A549 (cell line): ENCODE measurements at regions of chr12 and their contacts with region 1.

Region 1: DNA sequence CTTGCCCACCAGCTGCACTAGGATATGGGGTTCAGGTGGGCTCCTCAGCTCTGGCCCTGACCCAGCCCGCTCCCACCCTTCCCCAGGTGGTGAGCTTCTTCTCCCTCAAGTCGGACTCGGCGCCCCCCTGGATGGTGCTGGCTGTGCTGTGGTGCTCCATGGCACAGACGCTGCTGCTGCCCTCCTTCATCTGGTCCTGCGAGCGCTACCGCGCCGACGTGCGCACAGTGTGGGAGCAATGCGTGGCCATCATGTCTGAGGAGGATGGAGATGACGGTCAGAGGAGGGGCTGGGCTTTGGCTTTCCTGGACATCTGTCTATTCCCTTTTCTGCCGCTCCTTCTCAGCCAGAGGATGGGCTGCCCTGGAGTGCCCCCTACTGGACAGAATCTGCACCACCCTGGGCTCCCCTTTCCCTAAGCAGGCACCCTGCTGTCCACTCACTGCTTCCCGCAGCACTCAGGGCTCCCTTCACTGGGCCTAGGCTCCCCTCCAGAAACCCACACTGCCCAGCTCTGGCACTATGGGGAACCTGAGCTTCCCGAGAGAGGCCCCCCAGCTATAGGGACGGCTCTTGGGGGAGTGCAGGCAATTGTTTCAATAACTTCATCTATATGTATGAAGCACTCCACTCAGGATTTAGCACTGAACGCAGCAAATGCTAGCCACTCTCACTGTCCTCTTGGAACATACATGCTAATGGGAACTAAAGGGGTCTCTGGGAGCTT is 2.6 kb upstream of the P3H3 start:
- DNase-seq: peak; percentile 87 to 95
- ATAC-seq: peak; percentile 40 to 78
- H3K4me3 ChIP-seq: no peak overlapping the region
- H3K27ac ChIP-seq: peak overlapping the region in 1 of 2 experiments; percentile 39; a peak in 3 of 6 replicates
- H3K4me1 ChIP-seq: peaks cover 31% of the 10 kb centered on the region
- CTCF ChIP-seq: peak; percentile 92
- EP300 ChIP-seq: no peak
- POLR2A ChIP-seq: no peak
- RAD21 ChIP-seq: peak; percentile 91 to 94

Region 2: DNA sequence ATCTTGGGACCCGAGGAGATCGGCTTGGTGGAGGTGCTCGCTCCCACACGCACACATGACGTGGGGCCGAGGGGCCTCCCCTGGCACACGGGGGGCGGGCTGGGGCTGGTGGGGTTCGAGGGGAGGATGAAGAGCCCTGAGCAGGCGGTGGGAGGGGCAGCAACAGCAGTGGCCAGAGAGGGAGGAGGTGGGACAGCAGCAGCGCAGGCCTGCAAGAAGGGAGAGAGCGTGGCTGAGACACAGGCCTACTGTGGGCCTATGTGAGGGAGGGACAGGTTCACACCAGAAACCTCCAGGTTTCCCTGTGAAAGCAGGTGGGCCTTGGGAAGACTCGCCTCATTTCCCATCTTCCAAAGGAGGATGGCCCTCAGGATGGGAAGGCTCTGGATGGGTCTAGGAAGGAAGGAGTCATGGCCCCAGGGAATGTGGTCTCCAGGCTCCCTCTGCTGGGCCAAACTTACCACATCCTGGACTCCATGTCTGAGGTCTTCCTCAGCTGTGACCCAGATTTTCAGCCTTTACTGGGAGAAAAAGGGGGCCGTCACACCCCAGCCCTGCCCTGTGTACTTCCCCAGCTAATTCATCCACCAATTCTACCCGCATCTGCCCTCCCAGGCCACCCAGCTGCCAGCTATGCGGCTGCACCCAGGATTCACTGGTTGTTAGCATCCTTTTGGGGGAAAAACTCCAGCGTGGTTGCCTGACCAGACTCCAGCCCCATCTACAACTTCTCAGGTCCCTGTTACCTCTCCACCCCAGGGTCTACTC is 127.8 kb before region 1 on chr12:
- CTCF ChIA-PET with region 1: interaction called, 10 read pairs
- POLR2A ChIA-PET with region 1: no interaction called
- DNase-seq: peak; percentile 76 to 82
- ATAC-seq: peak; percentile 77 to 93
- H3K4me3 ChIP-seq: no peak overlapping the region
- H3K27ac ChIP-seq: no peak overlapping the region
- H3K4me1 ChIP-seq: peaks cover 7% of the 10 kb centered on the region; the same call in 1 of the 3 replicates
- CTCF ChIP-seq: peak; percentile 64
- EP300 ChIP-seq: no peak
- POLR2A ChIP-seq: no peak
- RAD21 ChIP-seq: peak; percentile 76 to 91

Region 3: DNA sequence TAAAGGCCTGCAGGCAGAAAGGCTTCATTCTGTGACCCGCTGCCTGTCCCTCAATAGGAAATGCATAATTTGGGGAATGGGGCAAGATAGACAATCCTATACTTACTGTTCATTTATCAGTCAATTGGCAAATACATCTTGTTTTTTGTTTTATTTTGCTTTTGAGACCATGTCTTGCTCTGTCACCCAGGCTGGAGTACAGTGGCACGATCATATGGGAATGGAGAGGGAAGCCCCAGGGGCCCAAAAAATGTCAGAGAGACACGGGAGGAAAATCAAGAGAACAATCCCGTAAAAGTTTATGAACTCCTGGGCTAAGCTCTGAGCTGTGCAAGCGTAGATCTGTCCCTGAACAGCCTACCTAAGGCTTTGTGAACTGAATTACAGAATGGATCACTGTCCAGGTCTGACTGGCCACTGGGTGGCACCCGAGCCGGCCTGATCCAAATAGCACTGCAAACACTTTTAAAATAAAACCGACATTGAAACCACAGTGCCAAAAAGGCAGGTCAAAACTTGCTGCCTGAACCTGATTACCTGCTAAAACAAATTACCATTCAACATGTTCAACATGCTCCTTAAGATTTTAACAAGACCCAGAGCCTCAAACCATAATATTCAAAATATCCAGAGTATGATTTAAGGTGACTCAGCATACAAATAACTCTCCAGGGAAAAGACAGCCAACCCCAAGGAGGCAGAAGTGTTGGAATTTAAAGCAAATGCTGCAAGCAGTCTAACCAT is 89.9 kb before region 1 on chr12:
- CTCF ChIA-PET with region 1: interaction called, 47 read pairs
- POLR2A ChIA-PET with region 1: no interaction called
- DNase-seq: peak; percentile 68 to 77
- ATAC-seq: peak; percentile 99
- H3K4me3 ChIP-seq: no peak overlapping the region
- H3K27ac ChIP-seq: peak overlapping the region; percentile 67 to 72
- H3K4me1 ChIP-seq: peaks cover 6% of the 10 kb centered on the region
- CTCF ChIP-seq: peak; percentile 90
- EP300 ChIP-seq: no peak
- POLR2A ChIP-seq: no peak
- RAD21 ChIP-seq: peak; percentile 80 to 83

Region 4: DNA sequence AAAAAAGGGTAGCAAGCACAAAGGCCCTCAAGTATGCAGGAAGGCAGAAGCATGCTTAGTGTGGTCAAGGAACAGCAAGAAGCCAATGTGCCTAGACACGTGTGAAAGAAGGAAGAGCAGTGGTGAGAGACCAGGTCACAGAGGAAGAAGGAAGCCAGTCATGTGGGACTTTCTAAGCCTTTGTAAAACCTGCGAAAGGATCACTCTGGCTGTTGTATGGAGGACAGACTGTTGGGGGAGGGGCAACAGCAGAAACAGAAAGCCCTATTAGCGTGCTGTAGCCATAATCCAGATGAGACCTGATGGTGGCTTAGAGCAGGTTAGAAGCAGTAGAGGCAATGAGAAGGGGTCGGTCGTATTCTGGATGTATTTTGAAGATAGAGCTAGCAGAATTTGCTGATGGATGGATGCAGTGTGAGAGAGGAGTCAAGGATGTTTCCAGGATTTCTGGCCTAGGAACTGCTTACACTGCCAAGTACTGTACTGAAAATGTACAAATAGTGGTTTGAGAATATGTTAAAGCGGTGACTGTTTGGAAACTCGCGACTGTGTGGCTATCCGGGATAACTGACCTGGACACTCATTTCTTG is 67.0 kb before region 1 on chr12:
- CTCF ChIA-PET with region 1: interaction called, 306 read pairs
- POLR2A ChIA-PET with region 1: interaction called, 20 read pairs
- DNase-seq: no peak
- ATAC-seq: no peak
- H3K4me3 ChIP-seq: no peak overlapping the region
- H3K27ac ChIP-seq: 0 out of 6 replicates have a peak overlapping the region, but pooled peaks of 1 of the 2 experiments have one; percentile 13
- H3K4me1 ChIP-seq: peaks cover 20% of the 10 kb centered on the region
- CTCF ChIP-seq: no peak
- EP300 ChIP-seq: no peak
- POLR2A ChIP-seq: no peak
- RAD21 ChIP-seq: no peak

Region 5: DNA sequence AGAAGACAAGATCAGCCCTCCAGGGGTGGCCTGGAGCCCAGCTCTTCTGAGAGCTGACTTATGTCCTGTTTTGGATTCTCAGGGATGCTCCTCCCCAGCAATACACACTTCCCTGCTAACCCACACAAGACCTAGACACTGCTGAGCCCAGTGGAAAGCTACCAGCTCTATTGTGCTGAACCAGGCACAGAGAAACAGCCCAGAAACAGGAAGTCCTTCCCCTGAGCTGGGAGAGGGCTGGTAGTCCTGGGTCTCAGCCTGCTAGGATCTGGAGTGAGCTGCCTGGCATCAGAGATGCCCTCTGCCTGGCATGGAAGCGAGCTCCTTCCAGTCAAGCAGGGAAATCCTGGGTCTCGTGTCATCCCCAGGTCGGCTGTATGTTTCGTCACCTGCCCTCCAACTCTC is 54.5 kb before region 1 on chr12:
- CTCF ChIA-PET with region 1: interaction called, 193 read pairs
- POLR2A ChIA-PET with region 1: interaction called, 4 read pairs
- DNase-seq: no peak
- ATAC-seq: no peak
- H3K4me3 ChIP-seq: no peak overlapping the region
- H3K27ac ChIP-seq: peak overlapping the region in 1 of 2 experiments; percentile 6; a peak in 1 of 6 replicates
- H3K4me1 ChIP-seq: peaks cover 49% of the 10 kb centered on the region
- CTCF ChIP-seq: no peak
- EP300 ChIP-seq: no peak
- POLR2A ChIP-seq: no peak
- RAD21 ChIP-seq: no peak

Region 6: GRCh38 chr12:6792522-6793201 is 32.9 kb before region 1 on chr12:
- CTCF ChIA-PET with region 1: interaction called, 193 read pairs
- POLR2A ChIA-PET with region 1: no interaction called
- DNase-seq: no peak
- ATAC-seq: peak; percentile 25 to 43; a peak in 5 of 6 replicates
- H3K4me3 ChIP-seq: no peak overlapping the region
- H3K27ac ChIP-seq: no peak overlapping the region
- H3K4me1 ChIP-seq: no peaks in the 10 kb centered on the region
- CTCF ChIP-seq: no peak
- EP300 ChIP-seq: no peak
- POLR2A ChIP-seq: no peak
- RAD21 ChIP-seq: no peak

Region 7: DNA sequence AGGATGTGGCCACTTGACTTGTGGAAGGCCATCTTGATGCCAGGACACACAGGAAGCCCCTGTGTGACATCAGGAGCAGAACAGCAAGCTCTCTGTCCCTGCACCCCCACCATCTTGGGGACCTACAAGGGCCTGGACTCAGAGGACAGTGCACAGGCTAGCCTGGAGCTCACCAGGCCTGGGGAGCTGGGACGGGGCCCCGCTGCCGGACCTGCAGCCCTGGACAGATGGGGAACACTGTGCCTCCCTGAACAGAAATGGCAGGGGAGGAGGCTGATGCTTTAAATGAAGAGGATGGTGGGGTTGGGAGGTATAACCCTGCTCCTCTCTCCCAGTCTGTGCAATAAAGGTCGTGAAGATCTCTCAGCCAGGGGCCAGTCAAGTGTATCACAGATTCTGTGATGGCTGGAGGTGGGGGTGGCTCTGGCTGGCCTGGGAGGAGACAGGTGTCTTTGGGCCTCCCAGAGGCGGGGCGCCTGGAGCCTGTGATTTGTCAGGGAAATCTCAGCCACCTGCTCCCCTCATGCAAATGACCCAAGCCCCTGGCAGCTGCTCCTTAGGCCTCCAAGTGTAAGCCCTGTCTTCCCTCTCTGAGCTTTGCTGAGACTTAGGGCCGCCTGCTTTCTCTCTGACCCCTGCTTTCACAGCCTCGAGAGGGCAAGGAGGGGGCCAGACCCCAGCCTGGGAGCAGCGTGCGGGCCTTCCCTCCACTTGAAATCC is 14.1 kb after region 1 on chr12:
- CTCF ChIA-PET with region 1: interaction called, 92 read pairs
- POLR2A ChIA-PET with region 1: no interaction called
- DNase-seq: no peak
- ATAC-seq: no peak
- H3K4me3 ChIP-seq: no peak overlapping the region
- H3K27ac ChIP-seq: no peak overlapping the region
- H3K4me1 ChIP-seq: no peaks in the 10 kb centered on the region
- CTCF ChIP-seq: no peak
- EP300 ChIP-seq: no peak
- POLR2A ChIP-seq: no peak
- RAD21 ChIP-seq: no peak

Region 8: DNA sequence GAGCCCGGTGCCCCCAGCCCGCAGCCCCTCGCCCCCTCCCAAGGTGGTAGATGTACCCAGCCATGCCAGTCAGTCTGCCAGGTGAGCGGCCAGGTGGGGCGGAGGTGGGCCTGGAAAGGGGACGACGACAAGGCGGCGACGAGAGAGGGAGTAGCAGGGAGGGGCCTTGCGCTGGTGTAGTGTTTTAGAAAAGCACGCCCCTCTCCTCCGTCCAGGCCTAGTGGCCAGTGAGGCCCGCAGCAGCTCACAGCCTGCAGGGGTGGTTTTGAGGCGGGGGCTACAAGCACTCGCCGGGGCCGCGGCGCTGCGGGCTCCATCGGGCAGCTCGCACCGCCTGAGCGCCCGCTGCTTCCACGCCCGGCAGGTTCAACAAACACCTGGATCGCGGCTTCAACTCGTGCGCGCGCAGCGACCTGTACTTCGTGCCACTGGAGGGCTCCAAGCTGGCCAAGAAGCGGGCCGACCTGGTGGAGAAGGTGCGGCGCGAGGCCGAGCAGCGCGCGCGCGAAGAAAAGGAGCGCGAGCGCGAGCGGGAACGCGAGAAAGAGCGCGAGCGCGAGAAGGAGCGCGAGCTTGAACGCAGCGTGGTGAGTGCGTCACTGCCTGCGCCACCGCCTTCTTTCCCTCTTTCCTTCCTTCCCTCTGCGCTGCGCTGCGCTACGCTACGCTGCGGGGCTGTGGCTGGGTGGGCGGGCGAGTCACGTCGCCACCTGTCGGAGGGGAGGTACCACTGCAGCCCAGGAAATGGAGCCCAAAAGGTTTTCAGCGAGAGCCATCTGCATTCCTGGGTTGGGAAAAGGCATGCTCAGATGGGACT is 112.1 kb after region 1 on chr12:
- CTCF ChIA-PET with region 1: no interaction called
- POLR2A ChIA-PET with region 1: no interaction called
- DNase-seq: peak; percentile 80 to 98
- ATAC-seq: peak; percentile 86 to 93
- H3K4me3 ChIP-seq: peak overlapping the region; percentile 49
- H3K27ac ChIP-seq: peak overlapping the region; percentile 81 to 92
- H3K4me1 ChIP-seq: peaks cover 45% of the 10 kb centered on the region
- CTCF ChIP-seq: peak; percentile 84
- EP300 ChIP-seq: no peak
- POLR2A ChIP-seq: peak; percentile 92
- RAD21 ChIP-seq: peak; percentile 37 to 40; a peak in 4 of 5 replicates